Right cardiac atrium (tissue), 5 donors: ENCODE measurements at regions of chr2 and their contacts with region 1.

Region 1: DNA sequence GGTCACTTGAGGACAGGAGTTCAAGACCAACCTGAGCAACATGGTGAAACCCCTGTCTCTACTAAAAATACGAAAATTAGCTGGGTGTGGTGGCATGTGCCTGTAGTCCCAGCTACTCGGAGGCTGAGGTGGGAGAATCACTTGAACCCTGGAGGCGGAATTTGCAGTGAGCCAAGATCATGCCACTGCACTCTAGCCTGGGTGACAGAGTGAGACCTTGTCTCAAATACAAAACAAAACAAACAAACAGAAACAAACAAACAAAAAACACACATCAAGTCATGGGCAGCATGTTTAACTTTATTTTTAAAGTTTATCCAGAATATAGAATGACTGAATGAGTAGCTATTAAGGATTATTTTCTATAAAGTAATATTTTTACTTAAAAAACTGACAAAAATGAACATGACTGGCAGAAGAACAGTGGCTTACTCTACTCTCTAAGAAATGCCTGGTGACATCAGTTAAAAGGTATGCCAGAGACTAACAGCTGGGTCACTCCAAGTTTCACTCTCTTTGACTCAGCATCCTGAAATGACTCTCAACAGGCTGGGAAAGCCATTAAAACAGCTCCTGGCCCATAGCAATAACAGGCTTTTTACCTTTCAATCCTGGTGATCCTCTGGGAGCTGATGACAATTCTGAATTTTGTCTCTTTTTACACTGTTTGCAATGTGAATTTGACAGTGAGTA is 281.6 kb upstream of the STON1 start:
- DNase-seq: no peak
- ATAC-seq: peak; percentile 88 to 93
- H3K4me3 ChIP-seq: no peak overlapping the region
- H3K27ac ChIP-seq: no peak overlapping the region
- H3K4me1 ChIP-seq: peaks cover 3% of the 10 kb centered on the region
- H3K27me3 ChIP-seq: no peaks in the 10 kb centered on the region

Region 2: GRCh38 chr2:48306409-48307284 is 58.3 kb after region 1 on chr2:
- intact Hi-C with region 1: loop called in 1 of 4 experiments (anchors 10 kb)
- DNase-seq: no peak
- ATAC-seq: peak; percentile 79 to 91
- H3K4me3 ChIP-seq: no peak overlapping the region
- H3K27ac ChIP-seq: peak overlapping the region; percentile 58
- H3K4me1 ChIP-seq: peaks cover 3% of the 10 kb centered on the region
- H3K27me3 ChIP-seq: no peaks in the 10 kb centered on the region

Region 3: DNA sequence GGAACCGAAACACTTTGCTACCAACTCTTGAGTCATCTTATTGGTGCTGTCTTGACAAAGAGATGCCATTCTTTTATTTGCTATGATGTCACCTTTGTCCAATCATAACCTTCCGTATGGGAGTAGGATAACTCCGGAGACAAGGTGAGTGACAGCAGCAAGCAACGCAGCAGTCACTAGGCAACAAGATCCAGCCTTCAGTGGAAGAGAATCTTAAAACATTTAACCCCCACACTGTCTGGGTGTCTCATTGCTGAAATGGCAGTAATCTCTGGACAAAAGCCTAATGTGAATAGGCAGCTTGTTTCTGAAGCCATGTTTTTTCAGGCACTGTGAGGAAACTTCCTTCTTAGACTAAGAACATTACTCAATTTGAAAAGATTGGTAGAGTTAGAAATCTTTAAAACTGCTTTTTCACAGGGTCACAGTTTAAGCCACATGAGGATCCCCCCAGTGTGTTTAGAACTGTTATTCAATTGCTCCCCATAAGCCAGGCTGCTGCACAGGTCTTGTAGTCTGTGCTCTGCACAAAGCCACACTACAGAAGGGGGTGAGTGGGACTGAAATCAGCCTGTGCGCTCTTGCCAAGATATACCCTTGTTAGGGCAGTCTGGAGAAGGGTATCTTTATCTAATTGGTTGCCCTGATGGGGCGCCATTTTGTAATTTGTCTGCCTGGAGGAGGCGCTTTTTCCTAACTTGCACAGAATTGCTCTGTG is 150.1 kb after region 1 on chr2:
- intact Hi-C with region 1: no loop called
- DNase-seq: no peak
- ATAC-seq: peak; percentile 37 to 72
- H3K4me3 ChIP-seq: peak overlapping the region; percentile 13
- H3K27ac ChIP-seq: no peak overlapping the region
- H3K4me1 ChIP-seq: peaks cover 6% of the 10 kb centered on the region
- H3K27me3 ChIP-seq: no peaks in the 10 kb centered on the region

Region 4: GRCh38 chr2:48414980-48415835 is 166.8 kb after region 1 on chr2:
- intact Hi-C with region 1: loop called in 1 of 4 experiments (anchors 10 kb)
- DNase-seq: peak in 2 of 3 donors; percentile 67 to 70
- ATAC-seq: peak; percentile 60 to 69
- H3K4me3 ChIP-seq: no peak overlapping the region
- H3K27ac ChIP-seq: peak overlapping the region; percentile 57
- H3K4me1 ChIP-seq: peaks cover 13% of the 10 kb centered on the region
- H3K27me3 ChIP-seq: no peaks in the 10 kb centered on the region